B cell (primary cell): ENCODE measurements at regions of chr6 and their contacts with region 1.

Region 1: DNA sequence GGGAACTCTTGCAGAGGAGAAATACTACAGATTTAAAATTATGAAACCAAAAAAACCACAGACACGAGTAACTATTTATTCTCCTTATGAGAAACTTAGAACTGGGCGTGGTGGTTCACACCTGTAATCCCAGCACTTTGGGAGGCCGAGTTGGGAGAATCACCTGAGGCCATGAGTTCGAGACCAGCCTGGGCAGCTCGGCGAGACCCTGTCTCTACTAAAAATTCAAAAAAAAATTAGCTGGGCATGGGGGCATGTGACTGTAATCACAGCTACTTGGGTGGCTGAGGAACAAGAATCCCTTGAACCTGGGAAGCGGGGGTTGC is 36.8 kb downstream of the SSR1 start:
- DNase-seq: no peak
- ATAC-seq: no peak
- H3K4me3 ChIP-seq: no peak overlapping the region
- H3K4me3 Mint-ChIP-seq: peak overlapping the region; percentile 64
- H3K27ac ChIP-seq: no peak overlapping the region
- H3K27ac Mint-ChIP-seq: peak overlapping the region; percentile 81
- H3K4me1 ChIP-seq: peaks cover 29 to 36% of the 10 kb centered on the region in 2 donors
- H3K4me1 Mint-ChIP-seq: peaks cover 28% of the 10 kb centered on the region
- H3K27me3 ChIP-seq: no peaks in the 10 kb centered on the region
- H3K27me3 Mint-ChIP-seq: no peaks in the 10 kb centered on the region
- CTCF ChIP-seq: peak; percentile 56

Region 2: GRCh38 chr6:7261032-7261841 is 14.9 kb before region 1 on chr6:
- CTCF ChIA-PET with region 1: interaction called, 12 read pairs
- POLR2A ChIA-PET with region 1: no interaction called
- intact Hi-C with region 1: no loop called
- DNase-seq: peak; percentile 60
- ATAC-seq: peak; percentile 87
- H3K4me3 ChIP-seq: peak overlapping the region; percentile 43 to 66 (median 60)
- H3K4me3 Mint-ChIP-seq: peak overlapping the region; percentile 96
- H3K27ac ChIP-seq: peak overlapping the region in 1 of 2 donors; percentile 9
- H3K27ac Mint-ChIP-seq: peak overlapping the region; percentile 33
- H3K4me1 ChIP-seq: peaks cover 16 to 18% of the 10 kb centered on the region in 2 donors
- H3K4me1 Mint-ChIP-seq: peaks cover 31% of the 10 kb centered on the region
- H3K27me3 ChIP-seq: peaks cover 0 to 24% (median 1%) of the 10 kb centered on the region in 4 experiments
- H3K27me3 Mint-ChIP-seq: peaks cover 16% of the 10 kb centered on the region
- CTCF ChIP-seq: no peak

Region 3: DNA sequence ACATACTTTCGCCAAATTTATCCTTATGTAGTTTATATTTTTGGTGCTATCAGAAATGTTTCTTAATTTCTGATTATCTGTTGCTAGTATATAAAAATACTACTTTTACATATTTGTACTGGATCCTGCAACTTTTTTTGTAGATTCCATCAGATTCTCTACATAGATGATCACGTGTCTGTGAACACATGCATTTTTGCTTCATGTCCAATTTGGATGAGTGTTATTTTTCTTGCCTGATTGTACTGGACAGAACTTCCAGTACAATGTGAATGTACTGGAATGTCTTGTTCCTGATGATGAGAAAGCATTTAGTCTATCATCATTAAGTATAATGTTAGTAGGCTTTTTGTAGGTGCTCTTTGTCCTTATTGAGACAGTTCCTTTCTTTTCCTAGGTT is 61.9 kb after region 1 on chr6:
- CTCF ChIA-PET with region 1: interaction called, 17 read pairs
- POLR2A ChIA-PET with region 1: no interaction called
- intact Hi-C with region 1: no loop called
- DNase-seq: no peak
- ATAC-seq: no peak
- H3K4me3 ChIP-seq: no peak overlapping the region
- H3K4me3 Mint-ChIP-seq: no peak overlapping the region
- H3K27ac ChIP-seq: no peak overlapping the region
- H3K27ac Mint-ChIP-seq: no peak overlapping the region
- H3K4me1 ChIP-seq: no peaks in the 10 kb centered on the region
- H3K4me1 Mint-ChIP-seq: no peaks in the 10 kb centered on the region
- H3K27me3 ChIP-seq: peaks cover 0 to 8% (median 0%) of the 10 kb centered on the region in 4 experiments
- H3K27me3 Mint-ChIP-seq: peaks cover 19% of the 10 kb centered on the region
- CTCF ChIP-seq: no peak

Region 4: GRCh38 chr6:7389451-7390225 is 113.5 kb after region 1 on chr6 and contains the starts of genes CAGE1 and RIOK1:
- CTCF ChIA-PET with region 1: interaction called, 34 read pairs
- POLR2A ChIA-PET with region 1: interaction called, 14 read pairs
- intact Hi-C with region 1: loop called (anchors 1 kb)
- DNase-seq: peak; percentile 98
- ATAC-seq: peak; percentile 89
- H3K4me3 ChIP-seq: peak within 1 kb of the TSS; percentile 83 to 96 (median 85)
- H3K4me3 Mint-ChIP-seq: peak within 1 kb of the TSS; percentile 96
- H3K27ac ChIP-seq: peak within 1 kb of the TSS; percentile 96 to 100
- H3K27ac Mint-ChIP-seq: peak within 1 kb of the TSS; percentile 99
- H3K4me1 ChIP-seq: peaks cover 18 to 26% of the 10 kb centered on the region in 2 donors
- H3K4me1 Mint-ChIP-seq: peaks cover 34% of the 10 kb centered on the region
- H3K27me3 ChIP-seq: no peaks in the 10 kb centered on the region
- H3K27me3 Mint-ChIP-seq: no peaks in the 10 kb centered on the region
- CTCF ChIP-seq: no peak
- total RNA-seq, gene CAGE1: 0.32 and 0.34 TPM in 2 replicates
- total RNA-seq, gene RIOK1: 25.9 and 32.1 TPM in 2 replicates

Region 5: DNA sequence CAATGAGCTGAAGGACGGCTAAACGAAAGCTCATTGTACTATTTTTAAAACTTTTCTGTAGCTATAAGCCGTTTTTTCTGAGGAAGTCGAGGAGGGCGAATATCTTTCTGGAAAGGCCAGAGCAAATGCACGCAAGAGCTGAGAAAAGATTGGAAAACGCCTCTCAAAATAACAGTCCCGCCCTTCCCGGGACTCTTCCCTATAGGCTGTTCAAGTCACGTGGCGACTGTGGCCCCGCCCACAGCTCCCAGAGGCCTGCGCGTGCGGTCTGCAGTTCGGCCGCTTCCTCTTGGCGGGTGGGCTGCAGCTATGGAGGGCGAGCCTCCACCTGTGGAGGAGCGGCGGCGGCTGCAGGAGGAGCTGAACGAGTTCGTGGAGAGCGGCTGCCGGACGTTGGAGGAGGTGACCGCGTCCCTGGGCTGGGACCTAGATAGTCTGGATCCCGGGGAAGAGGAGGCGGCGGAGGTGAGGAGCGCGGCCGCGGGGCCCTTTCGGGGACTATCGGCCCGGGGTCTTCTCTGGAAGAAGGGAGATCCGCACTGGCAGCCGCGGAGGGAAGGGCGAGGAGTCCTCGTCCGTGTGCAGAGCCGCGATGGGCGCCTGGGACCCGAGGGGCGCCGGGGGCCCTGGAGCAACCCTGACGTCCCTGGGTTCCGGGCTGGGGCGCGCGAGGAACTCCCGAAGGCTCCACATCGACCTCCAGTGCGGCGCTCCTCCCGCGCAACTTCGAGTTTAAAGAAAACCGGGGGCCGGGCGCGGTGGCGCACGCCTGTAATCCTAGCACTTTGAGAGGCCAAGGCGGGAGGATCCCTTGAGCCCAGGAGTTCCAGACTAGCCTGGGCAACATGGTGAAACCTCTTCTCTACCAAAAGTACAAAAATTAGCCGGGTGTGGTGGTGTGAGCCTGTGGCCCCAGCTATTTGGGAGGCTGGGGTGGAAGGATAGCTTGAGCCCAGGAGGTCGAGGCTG is 314.1 kb after region 1 on chr6 and contains the start of gene SNRNP48:
- CTCF ChIA-PET with region 1: interaction called, 16 read pairs
- POLR2A ChIA-PET with region 1: no interaction called
- intact Hi-C with region 1: loop called (anchors 1 kb)
- DNase-seq: peak; percentile 93
- ATAC-seq: peak; percentile 100
- H3K4me3 ChIP-seq: peak within 1 kb of the TSS; percentile 67 to 97 (median 87)
- H3K4me3 Mint-ChIP-seq: peak within 1 kb of the TSS; percentile 100
- H3K27ac ChIP-seq: peak within 1 kb of the TSS; percentile 23 to 62
- H3K27ac Mint-ChIP-seq: peak within 1 kb of the TSS; percentile 96
- H3K4me1 ChIP-seq: peaks cover 21 to 27% of the 10 kb centered on the region in 2 donors
- H3K4me1 Mint-ChIP-seq: peaks cover 35% of the 10 kb centered on the region
- H3K27me3 ChIP-seq: no peaks in the 10 kb centered on the region
- H3K27me3 Mint-ChIP-seq: no peaks in the 10 kb centered on the region
- CTCF ChIP-seq: no peak
- total RNA-seq, gene SNRNP48: 22.9 and 25.3 TPM in 2 replicates

Region 6: DNA sequence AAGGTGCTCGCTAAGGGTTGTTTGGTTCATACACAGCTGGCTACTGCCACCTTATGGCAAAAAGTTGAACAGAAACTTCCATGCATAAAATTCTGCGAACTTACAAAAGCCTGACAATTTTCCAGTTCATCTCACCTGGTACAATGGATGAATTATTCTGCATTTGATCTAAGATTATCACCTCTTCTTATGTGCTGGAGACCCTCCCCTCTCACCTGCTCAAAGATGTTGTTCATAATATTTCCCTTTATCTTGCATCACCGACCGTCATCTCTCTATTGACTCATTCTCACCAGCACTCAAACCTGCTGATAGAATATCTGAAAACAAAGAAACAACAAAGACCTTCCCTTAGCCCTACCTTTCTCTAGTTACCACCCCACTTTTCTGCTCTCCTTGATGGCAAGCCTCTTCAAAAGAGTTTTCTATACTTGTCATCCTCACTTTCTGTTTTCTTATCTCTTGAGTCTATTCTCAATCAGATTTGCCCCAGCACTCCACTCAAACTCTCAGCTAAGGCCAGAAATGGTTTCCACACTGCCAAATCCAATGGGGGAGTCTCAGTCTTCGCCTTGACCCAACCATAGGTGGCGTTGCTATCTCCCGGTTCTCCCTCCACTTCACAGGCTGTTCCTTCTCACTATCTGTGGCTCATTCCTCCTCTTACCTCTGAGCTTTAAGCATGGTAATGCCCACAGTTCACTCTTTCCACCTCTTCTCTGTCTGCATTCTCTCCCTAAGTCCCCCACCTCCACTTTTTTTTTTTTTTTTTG is 339.6 kb after region 1 on chr6:
- CTCF ChIA-PET with region 1: interaction called, 216 read pairs
- POLR2A ChIA-PET with region 1: interaction called, 3 read pairs
- intact Hi-C with region 1: loop called (anchors 1 kb)
- DNase-seq: peak; percentile 68
- ATAC-seq: peak; percentile 41
- H3K4me3 ChIP-seq: no peak overlapping the region
- H3K4me3 Mint-ChIP-seq: peak overlapping the region; percentile 3
- H3K27ac ChIP-seq: no peak overlapping the region
- H3K27ac Mint-ChIP-seq: no peak overlapping the region
- H3K4me1 ChIP-seq: peaks cover 0 to 15% of the 10 kb centered on the region in 2 donors
- H3K4me1 Mint-ChIP-seq: peaks cover 5% of the 10 kb centered on the region
- H3K27me3 ChIP-seq: peaks cover 0 to 5% (median 0%) of the 10 kb centered on the region in 4 experiments
- H3K27me3 Mint-ChIP-seq: peaks cover 4% of the 10 kb centered on the region
- CTCF ChIP-seq: peak; percentile 87

Region 7: DNA sequence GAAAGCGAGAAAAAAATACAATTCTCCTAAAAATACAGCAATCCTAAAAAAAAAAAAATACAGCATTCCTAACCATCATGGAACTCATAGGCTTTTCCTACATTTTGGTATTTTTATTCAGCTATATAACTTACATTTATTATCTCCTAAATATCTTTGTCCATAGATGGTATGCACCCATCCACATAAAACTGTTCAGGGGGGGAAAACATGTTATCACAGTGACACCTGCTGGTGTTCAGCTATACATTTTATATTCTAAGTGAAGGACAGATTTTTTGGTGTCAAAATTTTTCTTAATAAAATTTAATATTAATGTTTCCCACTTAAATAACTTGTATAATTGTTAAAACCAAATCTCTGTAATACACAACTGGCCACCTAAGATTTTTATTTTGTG is 730.0 kb after region 1 on chr6:
- CTCF ChIA-PET with region 1: interaction called, 8 read pairs
- POLR2A ChIA-PET with region 1: no interaction called
- intact Hi-C with region 1: loop called (anchors 5 kb)
- DNase-seq: peak; percentile 58
- ATAC-seq: no peak
- H3K4me3 ChIP-seq: no peak overlapping the region
- H3K4me3 Mint-ChIP-seq: no peak overlapping the region
- H3K27ac ChIP-seq: no peak overlapping the region
- H3K27ac Mint-ChIP-seq: no peak overlapping the region
- H3K4me1 ChIP-seq: no peaks in the 10 kb centered on the region
- H3K4me1 Mint-ChIP-seq: no peaks in the 10 kb centered on the region
- H3K27me3 ChIP-seq: no peaks in the 10 kb centered on the region
- H3K27me3 Mint-ChIP-seq: peaks cover 3% of the 10 kb centered on the region
- CTCF ChIP-seq: peak; percentile 75